ENCODE measurements at regions of chr2 and their contacts with region 1.

Region 1: DNA sequence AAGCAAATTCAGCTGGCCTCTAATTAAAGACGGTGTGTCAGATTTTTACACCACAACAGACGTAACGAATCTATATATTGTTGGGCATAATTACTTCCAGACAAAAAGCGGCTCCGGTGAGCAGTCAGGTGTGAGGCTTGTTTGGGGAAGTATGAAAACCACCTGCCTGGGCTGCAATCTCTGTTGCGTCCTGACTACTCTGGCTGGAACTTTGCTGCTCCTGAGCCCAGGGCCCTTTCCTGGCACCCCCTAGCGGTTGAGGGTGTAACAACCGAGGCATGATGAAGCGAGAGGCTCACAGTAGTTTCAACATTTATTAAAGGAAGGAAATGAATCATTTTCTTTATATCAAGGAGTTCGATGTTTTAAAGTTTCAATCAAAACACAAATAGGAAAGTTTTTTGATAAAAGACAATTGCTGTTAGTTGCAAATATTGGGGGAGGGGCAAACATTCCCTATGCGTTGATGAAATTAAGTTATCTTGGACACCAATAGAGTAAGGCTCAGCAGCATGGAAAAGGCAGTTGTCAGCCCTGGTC is 10.6 kb upstream of the ITGB6 start:
- DNase-seq: peak; percentile 60
- ATAC-seq: peak; percentile 88
- H3K4me3 ChIP-seq: no peak overlapping the region
- H3K27ac ChIP-seq: no peak overlapping the region
- H3K4me1 ChIP-seq: peaks cover 15% of the 10 kb centered on the region
- H3K27me3 ChIP-seq: peaks cover 0 to 4% of the 10 kb centered on the region in 2 experiments; a peak in 1 of 5 replicates
- CTCF ChIP-seq: peak; percentile 90
- EP300 ChIP-seq: no peak
- POLR2A ChIP-seq: no peak
- RAD21 ChIP-seq: peak; percentile 68

Region 2: DNA sequence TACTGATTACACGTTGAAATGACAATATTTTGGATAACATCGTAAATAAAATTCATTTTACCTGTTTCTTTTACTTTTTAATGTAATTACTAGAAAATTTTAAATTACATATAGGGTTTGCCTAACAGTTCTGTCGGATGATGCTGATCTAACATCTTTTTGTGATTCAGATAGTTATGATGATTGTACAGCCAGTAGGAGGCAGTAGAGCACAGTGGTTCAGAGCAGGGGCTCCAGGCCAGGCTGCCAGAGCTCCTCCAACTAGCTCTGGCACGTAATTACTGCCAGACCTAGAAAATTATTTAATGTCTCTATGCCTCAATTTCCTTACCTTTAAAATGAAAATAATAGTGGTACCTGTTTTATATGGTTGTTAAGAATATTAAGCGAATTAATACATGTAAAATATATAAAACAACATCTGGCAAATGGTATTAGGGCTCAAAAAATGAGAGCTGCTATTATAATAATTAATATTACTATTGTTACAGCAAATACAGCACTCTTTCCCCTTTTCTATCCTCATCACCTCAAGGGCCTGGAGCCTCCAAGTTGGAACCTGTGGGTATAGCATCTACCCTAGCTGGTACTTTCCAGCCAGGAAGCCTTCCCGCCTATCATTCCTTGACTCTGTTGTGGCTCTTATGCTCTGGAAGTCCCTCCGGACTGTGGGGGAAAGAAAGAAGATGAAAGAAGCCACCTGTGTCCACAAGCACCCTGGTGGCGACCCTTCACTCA is 100.6 kb before region 1 on chr2:
- CTCF ChIA-PET with region 1: interaction called, 30 read pairs
- POLR2A ChIA-PET with region 1: interaction called, 5 read pairs
- in situ Hi-C with region 1: loop called (anchors 5 kb)
- intact Hi-C with region 1: loop called (anchors 1 kb)
- DNase-seq: peak; percentile 62
- ATAC-seq: peak; percentile 97
- H3K4me3 ChIP-seq: no peak overlapping the region
- H3K27ac ChIP-seq: no peak overlapping the region
- H3K4me1 ChIP-seq: no peaks in the 10 kb centered on the region
- H3K27me3 ChIP-seq: peaks cover 0 to 8% of the 10 kb centered on the region in 2 experiments; a peak in 1 of 5 replicates
- CTCF ChIP-seq: peak; percentile 88
- EP300 ChIP-seq: no peak
- POLR2A ChIP-seq: no peak
- RAD21 ChIP-seq: peak; percentile 86

Region 3: GRCh38 chr2:160306985-160307384 is 96.3 kb after region 1 on chr2:
- CTCF ChIA-PET with region 1: no interaction called
- POLR2A ChIA-PET with region 1: no interaction called
- in situ Hi-C with region 1: no loop called
- intact Hi-C with region 1: no loop called
- DNase-seq: no peak
- ATAC-seq: no peak
- H3K4me3 ChIP-seq: no peak overlapping the region
- H3K27ac ChIP-seq: no peak overlapping the region
- H3K4me1 ChIP-seq: no peaks in the 10 kb centered on the region
- H3K27me3 ChIP-seq: no peaks in the 10 kb centered on the region
- CTCF ChIP-seq: no peak
- EP300 ChIP-seq: no peak
- POLR2A ChIP-seq: no peak
- RAD21 ChIP-seq: no peak

Region 4: DNA sequence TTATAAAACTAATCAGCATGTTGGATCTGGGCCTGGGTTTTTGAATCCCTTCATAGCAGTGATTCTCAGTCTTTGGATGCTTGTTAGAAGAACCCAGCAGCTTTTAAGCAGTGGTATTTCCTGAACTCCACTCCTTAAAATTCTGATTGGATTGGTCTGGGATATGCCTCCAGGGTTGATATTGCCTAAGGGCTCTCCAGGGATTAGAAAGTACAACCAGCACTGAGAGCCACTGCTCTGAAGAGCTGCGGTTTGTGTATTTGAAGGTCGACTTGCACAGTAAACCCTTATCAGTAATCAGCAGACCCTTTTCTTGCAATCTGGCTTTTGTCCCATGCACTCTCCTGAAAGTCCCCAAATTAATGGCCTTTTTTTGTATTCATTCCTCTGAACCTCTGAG is 299.9 kb after region 1 on chr2:
- CTCF ChIA-PET with region 1: no interaction called
- POLR2A ChIA-PET with region 1: no interaction called
- in situ Hi-C with region 1: no loop called
- intact Hi-C with region 1: no loop called
- DNase-seq: no peak
- ATAC-seq: no peak
- H3K4me3 ChIP-seq: no peak overlapping the region
- H3K27ac ChIP-seq: no peak overlapping the region
- H3K4me1 ChIP-seq: peaks cover 15% of the 10 kb centered on the region
- H3K27me3 ChIP-seq: peaks cover 0 to 21% of the 10 kb centered on the region in 2 experiments; a peak in 3 of 5 replicates
- CTCF ChIP-seq: no peak
- EP300 ChIP-seq: no peak
- POLR2A ChIP-seq: no peak
- RAD21 ChIP-seq: no peak

Measured in HepG2 (cell line).